ENCODE measurements at regions of chr12 and their contacts with region 1.

Region 1: DNA sequence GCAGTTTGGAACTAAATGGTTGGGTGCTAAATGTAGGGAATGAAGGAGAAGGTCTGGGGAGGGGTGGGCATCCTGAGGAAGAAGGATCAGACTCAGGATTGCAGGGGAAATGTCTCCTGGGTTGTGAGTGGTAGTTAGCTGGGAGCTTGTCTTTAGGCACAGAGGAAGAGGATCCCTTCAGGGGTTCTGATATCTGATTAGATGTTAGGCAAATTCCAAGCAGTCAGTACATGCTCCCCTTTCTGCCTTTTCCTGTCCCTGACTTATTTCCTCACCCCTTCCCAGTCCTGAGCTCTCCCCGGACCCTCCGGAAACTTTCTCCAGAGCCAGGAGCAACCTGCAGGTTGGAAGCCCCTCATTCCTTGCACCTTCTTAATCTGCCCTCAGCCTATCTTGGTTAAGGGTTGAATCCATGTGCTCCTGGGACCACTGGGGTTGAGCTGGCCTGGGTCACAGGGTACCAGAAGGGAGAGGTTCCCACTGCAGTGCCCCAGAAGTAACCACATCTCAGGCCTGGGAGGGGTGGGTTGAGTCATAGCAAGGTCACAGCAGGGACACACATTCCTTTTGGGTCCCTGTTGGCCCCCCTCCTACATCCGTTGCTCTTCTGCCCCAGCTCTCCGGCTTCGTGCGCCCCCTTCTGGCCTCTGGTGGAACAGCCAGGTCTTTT is 1.6 kb downstream of the IGFBP6 start:
- DNase-seq: peak; percentile 94
- ATAC-seq: peak; percentile 77 to 86 (median 83)
- H3K4me3 ChIP-seq: peak overlapping the region in 6 of 10 donors; percentile 62 to 82 (median 67)
- H3K27ac ChIP-seq: peak overlapping the region; percentile 79 to 97 (median 90)
- H3K4me1 ChIP-seq: peaks cover 10 to 68% (median 40%) of the 10 kb centered on the region in 9 donors
- H3K27me3 ChIP-seq: peaks cover 0 to 4% (median 0%) of the 10 kb centered on the region in 7 donors
- CTCF ChIP-seq: peak; percentile 91 to 99 (median 98)

Region 2: DNA sequence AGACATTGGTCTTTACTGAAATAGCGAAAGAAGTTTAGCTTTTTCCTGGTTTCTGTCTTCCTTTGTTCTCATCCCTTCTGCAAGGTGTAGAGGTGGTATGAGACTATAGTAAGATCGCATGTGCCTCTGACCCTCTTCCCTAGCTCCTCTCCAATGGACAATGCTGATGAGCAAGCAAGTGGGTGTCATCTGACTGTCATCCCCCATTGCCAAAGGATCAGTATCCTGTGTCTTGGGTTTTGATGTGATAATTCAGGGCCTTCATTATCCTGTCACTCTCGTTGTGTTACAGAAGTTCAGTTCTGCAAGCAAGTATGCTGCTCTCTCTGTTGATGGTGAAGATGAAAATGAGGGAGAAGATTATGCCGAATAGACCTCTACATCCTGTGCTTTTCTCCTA is 59.3 kb before region 1 on chr12:
- intact Hi-C with region 1: loop called in 1 of 10 experiments (anchors 5 kb)
- DNase-seq: no peak
- ATAC-seq: no peak
- H3K4me3 ChIP-seq: no peak overlapping the region
- H3K27ac ChIP-seq: peak overlapping the region in 3 of 10 donors; percentile 52 to 81 (median 54)
- H3K4me1 ChIP-seq: peaks cover 16 to 46% (median 39%) of the 10 kb centered on the region in 9 donors
- H3K27me3 ChIP-seq: no peaks in the 10 kb centered on the region
- CTCF ChIP-seq: no peak

Region 3: GRCh38 chr12:53065975-53066931 is 32.9 kb before region 1 on chr12:
- intact Hi-C with region 1: loop called (anchors 1 to 5 kb)
- DNase-seq: peak; percentile 82 to 86
- ATAC-seq: peak; percentile 56 to 77 (median 66)
- H3K4me3 ChIP-seq: no peak overlapping the region
- H3K27ac ChIP-seq: peak overlapping the region in 9 of 10 donors; percentile 17 to 88 (median 78)
- H3K4me1 ChIP-seq: peaks cover 62 to 100% (median 87%) of the 10 kb centered on the region in 9 donors
- H3K27me3 ChIP-seq: no peaks in the 10 kb centered on the region
- CTCF ChIP-seq: peak; percentile 87 to 96 (median 90)

Region 4: DNA sequence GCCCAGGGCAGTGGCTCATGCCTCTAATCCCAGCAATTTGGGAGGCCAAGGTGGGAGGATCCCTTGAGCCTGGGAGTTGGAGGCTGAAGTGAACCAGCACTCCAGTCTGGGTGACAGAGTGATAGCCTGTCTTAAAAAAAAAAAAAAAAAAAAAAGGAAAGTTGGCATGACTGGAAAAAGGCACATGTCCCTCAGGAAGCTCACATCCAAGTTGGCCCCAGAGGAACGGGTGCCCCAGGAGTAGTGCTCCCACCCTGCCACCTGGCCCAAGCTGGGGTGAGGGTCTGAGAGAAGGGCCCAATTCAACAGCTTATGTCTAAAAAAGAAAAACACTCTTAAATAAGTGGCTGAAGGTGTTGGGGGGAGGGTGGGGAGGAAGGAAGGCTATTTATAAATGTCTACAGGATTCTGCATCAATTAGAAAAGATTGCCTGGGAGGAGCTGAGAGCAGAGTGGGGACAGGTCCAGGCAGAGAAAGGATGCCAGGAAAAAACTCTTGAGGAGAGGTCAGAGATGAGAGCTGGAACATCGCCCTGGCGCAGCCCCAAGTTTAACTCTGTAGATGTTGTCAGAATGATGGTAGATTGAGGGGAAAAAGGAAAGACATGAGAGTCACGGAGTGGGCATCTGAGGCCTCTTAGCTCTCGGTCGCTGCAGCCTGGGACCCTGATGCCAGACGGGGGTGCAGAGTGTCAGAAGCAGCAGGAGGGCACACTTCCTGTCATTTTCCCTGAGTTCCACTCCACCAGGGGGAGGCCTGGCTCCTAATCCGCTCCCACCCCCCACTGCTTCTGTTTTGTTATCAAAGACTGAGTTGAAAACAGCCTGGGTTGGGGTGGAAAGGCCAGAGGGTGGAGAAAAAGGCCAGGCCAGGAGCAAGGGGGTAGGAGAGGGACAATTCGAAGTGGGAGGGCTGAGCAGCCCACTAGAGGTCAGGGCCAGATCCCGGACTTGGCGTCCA is 27.2 kb before region 1 on chr12:
- intact Hi-C with region 1: loop called in 5 of 10 experiments (anchors 2 to 5 kb)
- DNase-seq: peak; percentile 84
- ATAC-seq: peak; percentile 64 to 82 (median 67)
- H3K4me3 ChIP-seq: peak overlapping the region in 2 of 10 donors; percentile 8 to 12
- H3K27ac ChIP-seq: peak overlapping the region; percentile 59 to 89 (median 76)
- H3K4me1 ChIP-seq: peaks cover 51 to 79% (median 66%) of the 10 kb centered on the region in 9 donors
- H3K27me3 ChIP-seq: no peaks in the 10 kb centered on the region
- CTCF ChIP-seq: peak in 6 of 9 donors; percentile 12 to 53 (median 28)

Region 5: GRCh38 chr12:53079226-53080117 is 19.6 kb before region 1 on chr12 and contains the start of gene SPRYD3:
- intact Hi-C with region 1: loop called in 3 of 10 experiments (anchors 2 kb)
- DNase-seq: peak; percentile 96 to 97
- ATAC-seq: peak; percentile 98 to 100 (median 99)
- H3K4me3 ChIP-seq: peak within 1 kb of the TSS; percentile 55 to 95 (median 80)
- H3K27ac ChIP-seq: peak within 1 kb of the TSS; percentile 86 to 98 (median 96)
- H3K4me1 ChIP-seq: peaks cover 3 to 39% (median 24%) of the 10 kb centered on the region in 9 donors
- H3K27me3 ChIP-seq: no peaks in the 10 kb centered on the region
- CTCF ChIP-seq: no peak
- total RNA-seq, gene SPRYD3: 40.9 to 63.0 (median 47.4) TPM

Region 6: GRCh38 chr12:53321074-53321814 is 222.1 kb after region 1 on chr12 and contains the start of gene AAAS:
- intact Hi-C with region 1: no loop called
- DNase-seq: peak; percentile 95 to 96
- ATAC-seq: peak; percentile 87 to 94 (median 91)
- H3K4me3 ChIP-seq: peak within 1 kb of the TSS; percentile 26 to 79 (median 67)
- H3K27ac ChIP-seq: peak within 1 kb of the TSS; percentile 69 to 94 (median 86)
- H3K4me1 ChIP-seq: peaks cover 11 to 50% (median 37%) of the 10 kb centered on the region in 9 donors
- H3K27me3 ChIP-seq: peaks cover 0 to 8% (median 0%) of the 10 kb centered on the region in 7 donors
- CTCF ChIP-seq: peak; percentile 97 to 100 (median 100)
- total RNA-seq, gene AAAS: 33.5 to 42.2 (median 34.9) TPM

Measured in heart right ventricle (tissue), 16 donors.